ENCODE measurements at regions of chr14 and their contacts with region 1.

Region 1: DNA sequence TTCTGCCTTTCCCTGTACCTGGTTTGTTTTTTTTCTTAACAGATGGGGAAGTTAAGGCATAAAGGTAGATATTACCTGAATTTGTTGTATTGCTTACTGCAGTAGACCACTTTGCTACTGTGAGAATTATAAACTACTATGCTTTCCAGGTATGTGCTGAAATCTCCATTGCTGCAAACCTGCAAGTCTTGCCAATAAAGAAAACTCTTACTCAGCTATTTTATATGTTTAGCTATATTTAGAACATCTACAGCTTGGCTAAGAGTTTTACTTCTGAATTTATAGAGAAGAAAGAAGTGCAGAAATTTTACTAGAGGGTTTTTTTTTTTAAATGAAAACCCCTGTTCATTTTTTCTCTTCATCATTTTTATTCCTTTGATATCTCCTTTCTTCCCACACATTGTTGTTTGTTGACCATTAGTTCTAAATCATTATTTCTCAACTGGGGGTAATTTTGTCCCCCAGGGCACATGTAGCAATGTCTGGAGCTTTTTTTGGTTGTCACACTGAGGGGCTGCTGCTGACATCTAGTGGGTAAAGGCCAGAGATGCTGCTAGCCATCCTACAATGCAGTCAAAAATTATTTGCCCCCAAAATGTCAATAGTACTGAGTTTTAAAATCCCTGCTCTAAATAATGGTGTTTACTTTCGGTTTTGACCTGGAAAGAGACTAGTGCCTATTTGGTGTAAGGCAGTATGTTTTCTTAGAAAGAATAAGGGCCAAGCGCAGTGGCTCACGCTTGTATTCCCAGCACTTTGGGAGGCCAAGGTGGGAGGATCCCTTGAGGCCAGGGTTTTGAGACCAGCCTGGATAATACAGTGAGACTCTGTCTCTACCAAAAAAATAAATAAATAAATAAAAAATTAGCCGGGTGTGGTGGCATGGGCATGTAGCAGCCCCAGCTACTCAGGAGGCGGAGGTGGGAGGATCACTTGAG is 48.6 kb downstream of the PCNX1 start:
- DNase-seq: peak; percentile 53
- H3K4me3 Mint-ChIP-seq: no peak overlapping the region
- H3K27ac Mint-ChIP-seq: no peak overlapping the region
- H3K4me1 Mint-ChIP-seq: peaks cover 20% of the 10 kb centered on the region
- H3K27me3 Mint-ChIP-seq: no peaks in the 10 kb centered on the region

Region 2: GRCh38 chr14:70816525-70816924 is 139.3 kb before region 1 on chr14:
- CTCF ChIA-PET with region 1: interaction called, 47 read pairs
- POLR2A ChIA-PET with region 1: no interaction called
- DNase-seq: no peak
- H3K4me3 Mint-ChIP-seq: no peak overlapping the region
- H3K27ac Mint-ChIP-seq: no peak overlapping the region
- H3K4me1 Mint-ChIP-seq: peaks cover 10% of the 10 kb centered on the region
- H3K27me3 Mint-ChIP-seq: peaks cover 17% of the 10 kb centered on the region

Region 3: DNA sequence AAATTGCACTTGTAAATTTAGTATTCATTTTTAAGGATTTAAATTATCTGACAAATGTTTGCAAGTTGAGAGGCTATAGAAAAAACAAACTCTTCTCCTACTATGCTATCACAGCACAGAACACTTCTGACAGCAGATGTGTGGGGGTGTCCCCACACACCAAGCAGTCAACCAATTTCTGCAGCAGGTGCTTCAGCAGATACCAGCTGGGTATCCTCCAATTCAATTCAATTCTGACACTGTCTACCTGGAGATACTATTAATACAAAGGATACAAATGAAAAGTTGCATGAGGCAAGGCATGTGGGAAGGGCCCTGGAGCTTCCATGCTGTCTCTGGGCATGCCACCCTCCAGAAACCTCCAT is 13.5 kb before region 1 on chr14:
- CTCF ChIA-PET with region 1: interaction called, 27 read pairs
- POLR2A ChIA-PET with region 1: interaction called, 16 read pairs
- DNase-seq: no peak
- H3K4me3 Mint-ChIP-seq: no peak overlapping the region
- H3K27ac Mint-ChIP-seq: peak overlapping the region; percentile 70
- H3K4me1 Mint-ChIP-seq: peaks cover 57% of the 10 kb centered on the region
- H3K27me3 Mint-ChIP-seq: no peaks in the 10 kb centered on the region